ENCODE measurements at regions of chr6 and their contacts with region 1.

Region 1: GRCh38 chr6:89035252-89036106 is 45.1 kb upstream of the PNRC1 start:
- DNase-seq: peak; percentile 83
- ATAC-seq: peak; percentile 95

Region 2: DNA sequence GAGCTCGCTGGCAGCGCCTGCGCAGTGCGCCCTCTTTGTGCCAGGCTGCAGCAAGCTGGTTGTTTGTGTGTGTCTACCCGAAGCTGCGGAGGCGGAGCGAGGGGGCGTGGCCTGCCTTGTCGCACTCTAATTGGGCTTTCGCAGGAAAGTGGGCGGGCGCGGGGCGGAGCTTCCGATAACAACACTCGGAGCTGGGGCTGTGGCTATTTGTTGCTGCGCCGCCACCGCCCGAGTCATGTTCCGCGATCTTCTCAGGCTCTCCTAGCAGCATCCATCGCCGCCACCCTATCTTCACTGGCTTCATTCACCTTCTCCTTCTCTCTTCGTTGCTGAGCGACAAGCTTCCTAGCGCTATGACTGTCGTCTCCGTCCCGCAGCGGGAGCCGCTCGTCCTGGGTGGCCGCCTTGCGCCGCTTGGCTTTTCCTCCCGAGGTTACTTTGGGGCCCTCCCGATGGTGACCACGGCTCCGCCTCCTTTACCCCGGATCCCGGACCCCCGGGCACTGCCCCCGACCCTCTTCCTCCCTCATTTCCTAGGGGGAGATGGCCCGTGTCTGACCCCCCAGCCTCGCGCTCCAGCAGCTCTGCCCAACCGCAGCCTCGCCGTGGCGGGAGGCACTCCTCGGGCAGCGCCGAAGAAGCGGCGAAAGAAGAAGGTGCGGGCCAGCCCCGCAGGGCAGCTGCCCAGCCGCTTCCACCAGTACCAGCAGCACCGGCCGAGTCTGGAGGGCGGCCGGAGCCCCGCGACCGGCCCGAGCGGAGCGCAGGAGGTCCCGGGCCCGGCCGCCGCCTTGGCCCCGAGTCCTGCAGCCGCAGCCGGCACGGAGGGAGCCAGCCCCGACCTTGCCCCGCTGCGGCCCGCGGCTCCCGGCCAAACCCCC is 45.3 kb after region 1 on chr6 and contains the start of gene PNRC1:
- intact Hi-C with region 1: loop called (anchors 10 kb)
- DNase-seq: peak; percentile 100
- ATAC-seq: peak; percentile 90
- total RNA-seq, gene PNRC1: 161 TPM

Region 3: DNA sequence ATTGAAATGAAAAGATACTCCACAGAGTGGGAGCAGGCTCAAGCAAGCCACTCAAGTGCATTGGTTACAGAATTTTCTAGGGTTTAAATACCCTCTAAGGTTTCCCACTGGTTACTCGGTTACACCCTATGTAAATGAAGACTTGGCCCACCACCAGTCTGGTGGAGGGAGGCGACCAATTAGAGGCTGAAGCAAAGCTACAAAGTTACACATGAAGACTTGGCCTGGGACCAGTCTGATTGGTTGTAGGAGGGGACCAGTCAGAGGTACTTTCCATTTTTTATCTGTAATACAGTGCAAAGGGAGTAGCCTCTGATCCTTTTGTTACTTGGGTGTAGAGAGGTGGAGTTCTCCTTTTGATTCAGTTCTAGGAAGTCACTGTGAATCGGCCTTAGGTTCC is 74.8 kb after region 1 on chr6:
- intact Hi-C with region 1: no loop called
- DNase-seq: no peak
- ATAC-seq: no peak

Measured in left ventricle myocardium superior (tissue), 1 donor.